Activated CD4-positive, alpha-beta T cell treated with anti-CD3 and anti-CD28 coated beads for 36 hours (primary cell): ENCODE measurements at regions of chr6 and their contacts with region 1.

Region 1: GRCh38 chr6:117674991-117675657 is at the start of gene NUS1:
- DNase-seq: peak; percentile 98
- ATAC-seq: peak; percentile 96
- H3K4me3 Mint-ChIP-seq: peak within 1 kb of the TSS; percentile 80
- H3K27ac Mint-ChIP-seq: peak within 1 kb of the TSS; percentile 92
- H3K4me1 Mint-ChIP-seq: peaks cover 46% of the 10 kb centered on the region
- H3K27me3 Mint-ChIP-seq: no peaks in the 10 kb centered on the region
- total RNA-seq, gene NUS1: 34.0 to 38.3 TPM

Region 2: GRCh38 chr6:117389227-117390057 is 285.7 kb before region 1 on chr6:
- CTCF ChIA-PET with region 1: no interaction called
- POLR2A ChIA-PET with region 1: no interaction called
- intact Hi-C with region 1: no loop called
- DNase-seq: no peak
- ATAC-seq: no peak
- H3K4me3 Mint-ChIP-seq: no peak overlapping the region
- H3K27ac Mint-ChIP-seq: no peak overlapping the region
- H3K4me1 Mint-ChIP-seq: no peaks in the 10 kb centered on the region
- H3K27me3 Mint-ChIP-seq: peaks cover 2% of the 10 kb centered on the region

Region 3: DNA sequence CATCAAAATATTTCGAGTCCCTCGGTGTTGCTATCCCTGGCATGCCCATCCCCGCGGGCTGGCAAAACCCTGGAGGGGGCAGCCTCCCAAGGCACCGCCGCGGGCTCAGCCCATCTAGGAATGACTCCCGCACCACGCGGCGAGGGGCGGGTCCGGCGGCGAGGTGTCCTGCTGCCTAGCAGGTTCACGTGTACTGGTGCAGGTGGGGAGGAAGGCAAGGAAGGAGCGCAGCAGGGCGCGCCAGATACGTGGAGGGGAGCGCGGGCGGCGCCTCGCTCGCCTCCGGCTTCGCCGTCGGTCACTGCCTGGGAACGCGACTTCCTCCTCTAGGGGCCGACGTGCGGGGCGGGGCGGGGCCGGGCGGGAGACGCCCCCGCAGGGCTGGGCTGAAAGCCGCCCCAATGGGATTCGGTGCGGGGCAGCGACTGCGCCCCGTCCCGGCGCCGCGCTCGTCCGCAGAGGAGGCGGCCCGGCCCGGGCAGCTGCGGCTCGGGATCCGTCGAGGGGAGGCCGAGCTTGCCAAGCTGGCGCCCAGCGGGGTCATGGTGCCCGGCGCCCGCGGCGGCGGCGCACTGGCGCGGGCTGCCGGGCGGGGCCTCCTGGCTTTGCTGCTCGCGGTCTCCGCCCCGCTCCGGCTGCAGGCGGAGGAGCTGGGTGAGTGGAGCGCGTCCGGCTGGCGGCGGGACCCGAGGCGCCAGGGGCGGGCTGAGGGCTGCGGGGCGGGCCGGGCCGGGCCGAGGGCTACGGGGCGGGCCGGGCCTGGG is 192.7 kb before region 1 on chr6 and contains the start of gene DCBLD1:
- CTCF ChIA-PET with region 1: no interaction called
- POLR2A ChIA-PET with region 1: no interaction called
- intact Hi-C with region 1: loop called in 1 of 2 experiments (anchors 1 kb)
- DNase-seq: peak; percentile 72
- ATAC-seq: peak; percentile 86
- H3K4me3 Mint-ChIP-seq: peak within 1 kb of the TSS; percentile 75
- H3K27ac Mint-ChIP-seq: peak within 1 kb of the TSS; percentile 27
- H3K4me1 Mint-ChIP-seq: peaks cover 15% of the 10 kb centered on the region
- H3K27me3 Mint-ChIP-seq: peaks cover 50% of the 10 kb centered on the region
- total RNA-seq, gene DCBLD1: 1.2 to 1.6 TPM

Region 4: GRCh38 chr6:117615894-117616390 is 59.2 kb before region 1 on chr6:
- CTCF ChIA-PET with region 1: no interaction called
- POLR2A ChIA-PET with region 1: no interaction called
- intact Hi-C with region 1: loop called in 1 of 2 experiments (anchors 5 kb)
- DNase-seq: no peak
- ATAC-seq: no peak
- H3K4me3 Mint-ChIP-seq: no peak overlapping the region
- H3K27ac Mint-ChIP-seq: peak overlapping the region; percentile 66
- H3K4me1 Mint-ChIP-seq: peaks cover 21% of the 10 kb centered on the region
- H3K27me3 Mint-ChIP-seq: peaks cover 5% of the 10 kb centered on the region

Region 5: DNA sequence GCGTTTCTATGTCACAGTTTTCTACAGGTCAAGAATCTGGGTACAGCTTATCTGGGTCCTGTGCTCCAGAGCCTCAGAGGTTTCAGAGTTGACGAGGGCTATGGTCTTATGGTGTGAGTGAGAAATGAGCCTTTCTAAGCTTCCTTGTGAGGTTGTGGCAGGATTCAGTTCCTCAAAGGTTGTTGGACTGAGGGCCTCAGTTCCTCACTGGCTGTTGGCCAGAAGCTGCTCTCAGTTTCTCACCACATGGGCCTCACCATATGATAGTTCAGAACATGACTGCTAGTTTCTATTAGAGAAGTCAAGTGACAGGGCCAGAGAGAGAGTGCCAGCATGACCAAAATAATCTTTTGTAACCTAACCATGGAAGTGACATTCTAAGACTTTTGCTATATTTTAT is 96.3 kb after region 1 on chr6:
- CTCF ChIA-PET with region 1: no interaction called
- POLR2A ChIA-PET with region 1: no interaction called
- intact Hi-C with region 1: no loop called
- DNase-seq: no peak
- ATAC-seq: no peak
- H3K4me3 Mint-ChIP-seq: no peak overlapping the region
- H3K27ac Mint-ChIP-seq: no peak overlapping the region
- H3K4me1 Mint-ChIP-seq: no peaks in the 10 kb centered on the region
- H3K27me3 Mint-ChIP-seq: peaks cover 10% of the 10 kb centered on the region

Region 6: GRCh38 chr6:118934461-118935330 is 1259.6 kb after region 1 on chr6 and contains the start of gene MCM9:
- CTCF ChIA-PET with region 1: no interaction called
- POLR2A ChIA-PET with region 1: no interaction called
- intact Hi-C with region 1: loop called in 1 of 2 experiments (anchors 10 kb)
- DNase-seq: peak; percentile 94
- ATAC-seq: peak; percentile 97
- H3K4me3 Mint-ChIP-seq: peak within 1 kb of the TSS; percentile 87
- H3K27ac Mint-ChIP-seq: peak within 1 kb of the TSS; percentile 94
- H3K4me1 Mint-ChIP-seq: peaks cover 35% of the 10 kb centered on the region
- H3K27me3 Mint-ChIP-seq: no peaks in the 10 kb centered on the region
- total RNA-seq, gene MCM9: 17.0 to 17.2 TPM